GM23248 (cell line): ENCODE measurements at regions of chr4 and their contacts with region 1.

Region 1: DNA sequence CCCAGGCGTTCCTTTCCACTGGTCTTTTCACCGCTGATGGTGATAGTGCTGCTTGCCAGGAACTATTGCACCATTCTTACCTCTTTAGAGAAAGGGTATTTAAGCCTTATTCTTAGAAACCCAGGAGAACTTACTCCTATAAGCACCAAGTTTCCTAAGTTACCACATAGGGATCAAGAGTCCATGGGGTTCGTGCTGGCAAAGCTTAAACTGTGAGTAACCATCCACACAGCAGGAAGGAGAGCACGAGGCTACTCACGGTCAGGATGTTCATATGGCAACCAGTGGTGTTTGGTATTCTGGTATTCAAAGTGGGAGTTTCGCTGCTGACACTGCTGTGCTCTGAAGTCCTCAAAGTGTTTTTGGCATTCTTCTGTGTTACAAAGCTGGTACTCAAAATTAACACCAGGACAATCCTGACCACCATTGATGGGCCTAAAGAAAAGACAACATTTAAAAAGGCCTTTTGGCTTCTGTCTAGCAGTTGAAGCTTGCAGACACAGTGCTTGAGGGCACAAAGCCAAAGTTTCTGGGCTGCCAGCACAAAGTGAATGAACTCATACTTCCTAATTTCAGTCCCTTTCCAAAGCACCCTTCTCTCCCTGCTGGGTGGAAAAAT is 256.9 kb downstream of the ADAMTS3 start:
- DNase-seq: peak; percentile 97
- H3K4me3 ChIP-seq: peak overlapping the region; percentile 49
- H3K27ac ChIP-seq: peak overlapping the region; percentile 87
- H3K4me1 ChIP-seq: peaks cover 51% of the 10 kb centered on the region
- H3K27me3 ChIP-seq: no peaks in the 10 kb centered on the region

Region 2: GRCh38 chr4:72468904-72469502 is 156.9 kb after region 1 on chr4:
- in situ Hi-C with region 1: loop called (anchors 10 kb)
- DNase-seq: peak; percentile 54
- H3K4me3 ChIP-seq: no peak overlapping the region
- H3K27ac ChIP-seq: no peak overlapping the region
- H3K4me1 ChIP-seq: peaks cover 13% of the 10 kb centered on the region
- H3K27me3 ChIP-seq: no peaks in the 10 kb centered on the region